ENCODE measurements at regions of chr10 and their contacts with region 1.

Region 1: DNA sequence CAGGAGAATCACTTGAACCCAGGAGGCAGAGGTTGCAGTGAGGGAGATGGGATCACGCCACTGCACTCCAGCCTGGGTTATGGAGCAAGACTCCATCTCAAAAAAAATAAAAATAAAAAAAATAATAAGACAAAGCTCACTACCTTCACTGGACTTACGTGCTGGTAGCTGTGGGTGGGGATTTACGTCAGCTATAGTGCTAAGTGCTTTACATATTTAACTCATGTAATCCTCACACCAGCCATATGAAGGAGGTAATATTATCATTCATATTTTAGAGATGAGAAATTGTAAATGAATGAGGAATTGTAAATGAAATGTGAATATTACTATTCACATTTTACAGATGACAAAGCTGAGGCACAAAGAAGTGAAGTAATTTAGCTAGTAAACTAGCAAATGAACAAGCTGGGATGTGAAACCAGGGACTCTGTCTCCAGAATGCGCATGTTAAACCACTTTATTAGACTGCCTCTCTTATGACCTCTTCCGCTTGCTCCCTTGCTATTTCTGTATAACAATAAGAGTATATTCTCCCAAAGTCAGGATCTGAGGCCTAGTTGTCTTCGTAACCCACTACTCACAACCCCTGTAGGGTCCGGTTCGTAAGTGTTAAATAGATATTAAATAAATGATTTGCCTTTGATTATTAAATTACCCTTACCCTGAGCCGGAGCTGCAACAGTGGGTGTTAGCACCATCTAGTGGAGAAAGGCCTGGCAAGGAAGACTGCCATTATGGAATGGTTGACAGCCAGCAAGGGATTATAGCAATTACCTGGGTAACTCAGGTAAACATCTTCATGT is 70.2 kb downstream of the HTR7 start:
- DNase-seq: no peak
- H3K4me3 ChIP-seq: no peak overlapping the region
- H3K27ac ChIP-seq: no peak overlapping the region
- H3K4me1 ChIP-seq: peaks cover 0 to 10% (median 0%) of the 10 kb centered on the region in 6 donors
- H3K27me3 ChIP-seq: peaks cover 0 to 5% (median 0%) of the 10 kb centered on the region in 7 donors
- CTCF ChIP-seq: peak in 9 of 11 experiments; percentile 24 to 67 (median 54)
- POLR2A ChIP-seq: no peak

Region 2: GRCh38 chr10:89793649-89794254 is 993.8 kb before region 1 on chr10:
- intact Hi-C with region 1: loop called (anchors 5 kb)
- DNase-seq: no peak
- H3K4me3 ChIP-seq: no peak overlapping the region
- H3K27ac ChIP-seq: no peak overlapping the region
- H3K4me1 ChIP-seq: no peaks in the 10 kb centered on the region
- H3K27me3 ChIP-seq: peaks cover 0 to 8% (median 0%) of the 10 kb centered on the region in 7 donors
- CTCF ChIP-seq: peak; percentile 22 to 87 (median 71)
- POLR2A ChIP-seq: no peak

Region 3: GRCh38 chr10:90695915-90696676 is 91.5 kb before region 1 on chr10:
- intact Hi-C with region 1: no loop called
- DNase-seq: no peak
- H3K4me3 ChIP-seq: no peak overlapping the region
- H3K27ac ChIP-seq: no peak overlapping the region
- H3K4me1 ChIP-seq: no peaks in the 10 kb centered on the region
- H3K27me3 ChIP-seq: peaks cover 0 to 9% (median 0%) of the 10 kb centered on the region in 7 donors
- CTCF ChIP-seq: no peak
- POLR2A ChIP-seq: no peak

Region 4: DNA sequence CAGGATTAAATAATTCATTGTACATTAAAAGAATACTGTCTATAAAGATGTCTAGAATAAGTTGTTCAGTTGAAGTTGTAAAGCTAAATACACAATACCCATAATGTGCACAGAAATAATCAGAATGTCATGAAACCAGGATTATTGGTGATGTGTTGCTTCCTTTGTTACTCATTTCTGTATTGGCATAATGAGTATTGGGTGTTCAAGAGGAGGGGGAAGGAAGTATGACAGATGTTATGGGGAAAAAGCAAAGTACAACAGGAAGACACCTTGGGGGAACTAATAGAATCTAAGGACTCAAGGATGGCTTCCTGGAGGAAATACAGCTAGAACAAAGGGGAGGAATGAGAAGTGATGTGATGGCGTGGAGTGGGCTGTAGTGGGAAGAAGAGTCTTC is 118.3 kb after region 1 on chr10:
- intact Hi-C with region 1: no loop called
- DNase-seq: no peak
- H3K4me3 ChIP-seq: no peak overlapping the region
- H3K27ac ChIP-seq: no peak overlapping the region
- H3K4me1 ChIP-seq: no peaks in the 10 kb centered on the region
- H3K27me3 ChIP-seq: no peaks in the 10 kb centered on the region
- CTCF ChIP-seq: no peak
- POLR2A ChIP-seq: no peak

Region 5: DNA sequence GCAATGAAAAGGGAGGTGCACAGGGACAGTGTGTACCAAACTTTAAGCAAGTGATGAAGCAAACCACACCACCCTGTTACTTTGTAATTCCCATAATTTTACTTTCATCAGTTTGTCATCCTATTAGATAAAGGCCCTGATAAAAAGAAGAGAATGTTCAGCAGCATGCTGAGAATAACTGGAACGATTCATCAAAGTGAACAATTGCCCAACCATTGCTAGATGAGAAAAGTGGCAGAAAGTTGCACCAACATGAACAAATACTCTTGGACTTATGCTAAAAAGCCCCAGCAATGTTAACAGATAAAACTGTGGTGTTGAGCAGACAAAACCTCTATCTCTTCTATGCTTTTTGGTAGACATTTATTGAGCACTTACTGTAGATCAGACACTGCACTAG is 357.4 kb after region 1 on chr10:
- intact Hi-C with region 1: no loop called
- DNase-seq: no peak
- H3K4me3 ChIP-seq: no peak overlapping the region
- H3K27ac ChIP-seq: no peak overlapping the region
- H3K4me1 ChIP-seq: no peaks in the 10 kb centered on the region
- H3K27me3 ChIP-seq: no peaks in the 10 kb centered on the region
- CTCF ChIP-seq: no peak
- POLR2A ChIP-seq: no peak